Psoas muscle (tissue), 8 donors: ENCODE measurements at regions of chr12 and their contacts with region 1.

Region 1: DNA sequence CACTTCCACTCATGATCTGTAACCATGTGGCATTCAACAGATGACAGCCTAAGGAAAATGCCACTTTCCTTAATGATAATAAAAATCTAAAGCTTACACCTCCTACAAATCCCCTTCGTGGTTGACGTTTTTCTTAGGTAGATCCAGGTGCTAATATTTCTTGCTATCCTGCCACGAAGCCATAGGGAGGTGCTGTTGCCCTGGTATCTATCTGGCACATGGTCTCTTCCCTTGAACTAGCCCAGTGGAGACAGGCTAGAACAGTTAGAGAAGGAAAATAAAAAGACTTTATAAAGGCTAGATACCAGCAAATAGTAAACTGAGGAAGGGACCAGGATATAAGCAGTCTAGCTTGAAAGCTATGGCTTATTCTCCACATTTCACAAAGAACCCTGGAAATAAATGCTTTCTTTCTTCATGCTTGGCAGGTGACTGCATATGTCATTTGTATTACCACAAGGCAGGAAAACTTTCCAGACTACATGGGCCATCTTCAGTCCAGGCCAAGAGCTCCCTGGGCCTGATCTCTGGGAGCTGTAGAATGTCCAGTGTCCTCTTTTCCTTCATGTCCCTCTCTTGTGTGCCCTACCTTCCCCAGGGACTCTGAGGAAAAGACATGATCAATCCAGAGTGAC is 15.3 kb downstream of the SPIC start:
- DNase-seq: no peak
- ATAC-seq: peak; percentile 91 to 98 (median 96)
- H3K4me3 ChIP-seq: no peak overlapping the region
- H3K27ac ChIP-seq: peak overlapping the region; percentile 72
- H3K4me1 ChIP-seq: peaks cover 11% of the 10 kb centered on the region
- H3K27me3 ChIP-seq: no peaks in the 10 kb centered on the region
- CTCF ChIP-seq: peak; percentile 70

Region 2: DNA sequence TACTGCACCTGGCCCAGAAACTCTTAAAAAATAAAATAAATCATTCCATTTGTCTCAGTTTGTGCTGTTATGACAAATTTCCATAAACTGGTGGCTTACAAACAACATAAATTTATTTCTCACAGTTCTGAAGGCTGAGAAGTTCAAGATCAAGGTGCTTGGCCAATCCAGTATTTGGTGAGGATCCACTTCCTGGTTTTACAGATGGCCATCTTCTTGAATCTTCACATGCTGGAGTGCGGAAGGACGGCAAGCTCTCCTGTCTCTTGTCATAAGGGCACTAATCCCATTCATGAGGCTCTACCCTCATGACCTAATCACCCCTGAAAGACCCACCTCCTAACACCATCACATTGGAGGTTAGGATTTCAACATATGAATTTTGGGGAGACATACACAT is 74.5 kb after region 1 on chr12:
- intact Hi-C with region 1: loop called in 1 of 2 experiments (anchors 5 kb)
- DNase-seq: no peak
- ATAC-seq: no peak
- H3K4me3 ChIP-seq: no peak overlapping the region
- H3K27ac ChIP-seq: no peak overlapping the region
- H3K4me1 ChIP-seq: peaks cover 44% of the 10 kb centered on the region
- H3K27me3 ChIP-seq: no peaks in the 10 kb centered on the region
- CTCF ChIP-seq: no peak

Region 3: GRCh38 chr12:101616027-101616494 is 125.7 kb after region 1 on chr12:
- intact Hi-C with region 1: loop called in 1 of 2 experiments (anchors 5 kb)
- DNase-seq: no peak
- ATAC-seq: peak in 1 of 4 donors; percentile 46
- H3K4me3 ChIP-seq: no peak overlapping the region
- H3K27ac ChIP-seq: peak overlapping the region; percentile 88
- H3K4me1 ChIP-seq: peaks cover 88% of the 10 kb centered on the region
- H3K27me3 ChIP-seq: no peaks in the 10 kb centered on the region
- CTCF ChIP-seq: no peak

Region 4: DNA sequence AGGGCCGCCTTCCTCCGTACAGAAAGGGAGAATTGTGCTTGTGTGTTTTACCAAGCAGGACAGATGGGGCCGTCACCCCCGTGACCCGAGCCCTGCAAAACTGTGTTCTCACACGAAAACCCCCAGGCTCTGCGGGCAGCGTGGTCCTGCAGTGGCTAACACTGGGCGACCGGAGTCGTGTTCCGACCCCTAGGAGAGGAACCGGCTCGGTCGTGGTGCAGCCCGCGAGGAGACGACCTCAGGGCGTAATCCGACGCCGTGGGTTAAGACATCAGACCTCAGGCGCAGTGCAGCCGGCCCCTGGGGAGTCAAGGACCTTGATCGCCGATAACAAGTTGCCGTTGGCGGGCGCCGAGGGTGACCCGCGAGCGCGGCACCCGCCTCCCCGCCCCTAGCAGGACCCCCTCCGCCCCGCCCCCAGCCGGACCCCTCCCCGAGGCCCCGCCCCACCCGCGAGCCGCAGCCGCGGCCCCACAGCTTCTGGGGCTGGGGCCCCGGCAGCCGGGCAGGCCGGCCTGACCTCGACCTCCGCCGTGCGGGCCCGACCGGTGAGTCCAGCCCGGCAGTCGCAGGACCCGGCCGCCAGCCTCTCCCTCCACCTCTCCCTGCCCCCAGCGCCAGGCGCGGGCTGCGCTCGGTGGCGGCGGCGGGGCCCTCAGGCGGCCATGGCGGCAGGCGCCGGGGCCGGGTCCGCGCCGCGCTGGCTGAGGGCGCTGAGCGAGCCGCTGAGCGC is 207.0 kb after region 1 on chr12 and contains the start of gene CHPT1:
- intact Hi-C with region 1: loop called in 1 of 2 experiments (anchors 10 kb)
- DNase-seq: peak; percentile 80 to 90
- ATAC-seq: peak; percentile 68 to 77 (median 74)
- H3K4me3 ChIP-seq: peak within 1 kb of the TSS; percentile 96
- H3K27ac ChIP-seq: peak within 1 kb of the TSS; percentile 97
- H3K4me1 ChIP-seq: peaks cover 45% of the 10 kb centered on the region
- H3K27me3 ChIP-seq: no peaks in the 10 kb centered on the region
- CTCF ChIP-seq: no peak
- total RNA-seq, gene CHPT1: 17.9 to 31.3 (median 20.7) TPM

Region 5: DNA sequence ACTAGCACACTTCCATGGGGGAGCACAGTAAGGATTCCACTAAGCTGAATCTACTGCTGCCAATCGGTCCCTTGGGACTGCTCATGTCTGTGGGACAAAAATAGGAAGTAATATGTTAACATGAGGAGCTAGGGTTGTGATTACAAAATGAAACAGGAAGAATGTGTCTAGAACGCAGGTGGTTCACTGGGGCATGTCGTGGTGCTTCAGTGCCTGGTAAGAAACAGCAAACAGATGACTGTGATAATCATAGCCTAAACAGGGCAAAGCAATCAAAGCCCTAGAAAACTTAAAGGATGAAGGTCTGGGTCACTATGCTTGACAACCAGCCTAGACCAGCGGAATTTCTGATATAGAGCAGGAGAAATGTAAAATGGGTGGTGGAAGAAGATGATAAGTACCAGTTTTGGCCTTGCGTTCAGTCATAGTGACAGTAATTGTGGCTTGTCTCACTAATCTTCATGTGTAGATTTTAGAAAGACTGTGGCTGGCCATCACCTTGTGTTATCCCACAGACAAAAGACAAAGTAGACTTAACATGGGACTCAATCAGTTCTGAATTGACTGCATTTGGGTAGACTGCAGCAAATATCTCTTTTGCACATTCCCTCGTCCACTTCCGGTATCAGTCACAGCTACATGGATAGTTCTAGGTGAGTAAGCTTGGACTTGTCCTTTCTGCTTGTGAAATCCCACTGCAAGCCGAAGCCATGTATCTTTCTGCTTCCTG is 520.0 kb after region 1 on chr12:
- intact Hi-C with region 1: no loop called
- DNase-seq: no peak
- ATAC-seq: peak in 3 of 4 donors; percentile 16 to 53 (median 26)
- H3K4me3 ChIP-seq: no peak overlapping the region
- H3K27ac ChIP-seq: no peak overlapping the region
- H3K4me1 ChIP-seq: no peaks in the 10 kb centered on the region
- H3K27me3 ChIP-seq: no peaks in the 10 kb centered on the region
- CTCF ChIP-seq: no peak